ENCODE measurements at regions of chr11 and their contacts with region 1.

Region 1: GRCh38 chr11:124194698-124195410 is 11.7 kb downstream of the OR10D3 start:
- DNase-seq: no peak
- H3K4me3 Mint-ChIP-seq: no peak overlapping the region
- H3K27ac Mint-ChIP-seq: no peak overlapping the region
- H3K4me1 Mint-ChIP-seq: no peaks in the 10 kb centered on the region
- H3K27me3 Mint-ChIP-seq: peaks cover 19% of the 10 kb centered on the region

Region 2: DNA sequence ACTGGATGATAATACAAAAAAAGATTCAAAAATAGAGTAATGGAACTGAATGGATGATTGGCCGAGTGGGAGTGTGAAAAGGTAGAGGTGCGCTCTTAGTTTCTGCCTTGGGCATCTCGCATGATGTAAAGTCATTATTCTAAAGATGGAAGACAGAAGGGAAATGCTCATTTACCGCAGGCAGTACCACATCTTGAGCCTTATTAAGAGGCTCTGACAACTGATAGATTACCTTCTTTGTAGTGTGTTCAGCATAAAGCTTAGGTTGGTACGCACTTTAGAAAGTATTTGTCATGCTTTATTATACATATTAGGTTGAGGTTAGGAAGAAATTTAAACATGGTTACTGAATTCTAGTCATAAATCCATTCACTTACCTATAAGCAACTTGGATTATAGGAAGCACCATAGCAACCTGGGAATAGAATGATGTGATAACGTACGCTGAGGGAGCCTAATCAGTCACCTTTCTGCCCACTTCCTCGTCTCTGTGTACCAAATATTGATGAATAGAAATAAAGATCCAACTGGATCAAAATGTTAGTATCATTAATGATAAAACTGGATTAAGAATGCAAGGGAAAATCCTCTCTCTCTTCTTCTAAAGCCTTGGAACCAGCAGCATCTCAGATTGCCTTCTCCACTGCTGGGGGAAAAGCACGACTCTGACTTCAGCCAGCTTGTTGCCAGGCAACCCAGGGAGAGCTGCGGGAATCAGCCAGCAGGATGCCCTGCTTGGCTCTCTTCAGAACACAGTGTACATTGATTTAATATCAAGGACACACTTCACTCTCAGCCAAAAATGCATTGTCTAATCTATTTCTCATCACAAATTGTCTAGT is 108.6 kb before region 1 on chr11:
- intact Hi-C with region 1: no loop called
- DNase-seq: no peak
- H3K4me3 Mint-ChIP-seq: no peak overlapping the region
- H3K27ac Mint-ChIP-seq: no peak overlapping the region
- H3K4me1 Mint-ChIP-seq: no peaks in the 10 kb centered on the region
- H3K27me3 Mint-ChIP-seq: peaks cover 31% of the 10 kb centered on the region

Region 3: GRCh38 chr11:124108156-124108555 is 86.7 kb before region 1 on chr11:
- intact Hi-C with region 1: loop called (anchors 2 kb)
- DNase-seq: no peak
- H3K4me3 Mint-ChIP-seq: no peak overlapping the region
- H3K27ac Mint-ChIP-seq: no peak overlapping the region
- H3K4me1 Mint-ChIP-seq: no peaks in the 10 kb centered on the region
- H3K27me3 Mint-ChIP-seq: peaks cover 48% of the 10 kb centered on the region

Region 4: DNA sequence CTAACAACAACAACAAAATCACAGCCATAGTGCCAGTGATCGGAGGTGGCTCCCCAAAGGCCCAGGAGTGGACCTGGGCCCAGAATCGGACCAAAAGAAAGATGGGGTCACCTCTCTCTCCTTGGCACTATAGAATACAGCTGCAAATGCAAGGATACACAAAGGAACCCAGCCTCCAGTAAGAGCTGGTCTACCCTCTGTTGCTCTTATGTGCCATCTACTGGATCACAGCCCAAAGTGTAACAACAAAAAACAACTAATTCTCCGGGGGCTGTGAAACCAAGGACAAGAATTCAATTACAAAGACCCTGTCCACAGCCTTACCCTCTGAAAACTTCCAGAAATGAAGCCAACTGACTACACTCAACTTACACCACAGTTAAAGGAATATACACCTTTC is 83.0 kb after region 1 on chr11:
- intact Hi-C with region 1: loop called (anchors 5 kb)
- DNase-seq: no peak
- H3K4me3 Mint-ChIP-seq: no peak overlapping the region
- H3K27ac Mint-ChIP-seq: no peak overlapping the region
- H3K4me1 Mint-ChIP-seq: peaks cover 16% of the 10 kb centered on the region
- H3K27me3 Mint-ChIP-seq: peaks cover 28% of the 10 kb centered on the region

Region 5: GRCh38 chr11:124570160-124570559 is 375.3 kb after region 1 on chr11:
- intact Hi-C with region 1: no loop called
- DNase-seq: no peak
- H3K4me3 Mint-ChIP-seq: no peak overlapping the region
- H3K27ac Mint-ChIP-seq: no peak overlapping the region
- H3K4me1 Mint-ChIP-seq: no peaks in the 10 kb centered on the region
- H3K27me3 Mint-ChIP-seq: peaks cover 9% of the 10 kb centered on the region

Measured in activated T-helper 2 cell treated with anti-CD3 and anti-CD28 coated beads, Interferon-gamma antibody, Interleukin-2, Interleukin-4, amounts not matched to agents 10 μg/mL and 5 μg/mL and 100 μg/mL, durations not matched to agents 14 hours and 24 hours and 36 hours (primary cell).